ENCODE measurements at regions of chr13 and their contacts with region 1.

Region 1: DNA sequence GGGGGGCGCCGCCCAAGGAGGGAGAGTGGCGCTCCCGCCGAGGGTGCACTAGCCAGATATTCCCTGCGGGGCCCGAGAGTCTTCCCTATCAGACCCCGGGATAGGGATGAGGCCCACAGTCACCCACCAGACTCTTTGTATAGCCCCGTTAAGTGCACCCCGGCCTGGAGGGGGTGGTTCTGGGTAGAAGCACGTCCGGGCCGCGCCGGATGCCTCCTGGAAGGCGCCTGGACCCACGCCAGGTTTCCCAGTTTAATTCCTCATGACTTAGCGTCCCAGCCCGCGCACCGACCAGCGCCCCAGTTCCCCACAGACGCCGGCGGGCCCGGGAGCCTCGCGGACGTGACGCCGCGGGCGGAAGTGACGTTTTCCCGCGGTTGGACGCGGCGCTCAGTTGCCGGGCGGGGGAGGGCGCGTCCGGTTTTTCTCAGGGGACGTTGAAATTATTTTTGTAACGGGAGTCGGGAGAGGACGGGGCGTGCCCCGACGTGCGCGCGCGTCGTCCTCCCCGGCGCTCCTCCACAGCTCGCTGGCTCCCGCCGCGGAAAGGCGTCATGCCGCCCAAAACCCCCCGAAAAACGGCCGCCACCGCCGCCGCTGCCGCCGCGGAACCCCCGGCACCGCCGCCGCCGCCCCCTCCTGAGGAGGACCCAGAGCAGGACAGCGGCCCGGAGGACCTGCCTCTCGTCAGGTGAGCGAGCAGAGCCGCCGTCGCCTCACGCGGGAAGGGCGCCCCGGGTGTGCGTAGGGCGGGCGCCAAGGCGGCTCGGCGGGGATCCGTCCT is at the start of gene RB1:
- DNase-seq: peak; percentile 80
- ATAC-seq: peak; percentile 92
- H3K4me3 ChIP-seq: peak within 1 kb of the TSS; percentile 79 to 91 (median 91)
- H3K27ac ChIP-seq: peak within 1 kb of the TSS; percentile 94
- H3K4me1 ChIP-seq: peaks cover 20% of the 10 kb centered on the region
- H3K27me3 ChIP-seq: no peaks in the 10 kb centered on the region; a peak in 1 of 5 replicates
- CTCF ChIP-seq: 0 out of 2 replicates have a peak, but pooled peaks have one; percentile 2
- EP300 ChIP-seq: 0 out of 4 replicates have a peak, but pooled peaks of 1 of the 2 experiments have one; percentile 24
- POLR2A ChIP-seq: peak; percentile 73 to 82
- RAD21 ChIP-seq: peak; percentile 13
- total RNA-seq, gene RB1: 23.7 and 35.7 TPM in 2 replicates

Region 2: GRCh38 chr13:47788844-47789243 is 514.7 kb before region 1 on chr13:
- CTCF ChIA-PET with region 1: no interaction called
- POLR2A ChIA-PET with region 1: no interaction called
- in situ Hi-C with region 1: no loop called
- intact Hi-C with region 1: no loop called
- DNase-seq: no peak
- ATAC-seq: no peak
- H3K4me3 ChIP-seq: no peak overlapping the region
- H3K27ac ChIP-seq: no peak overlapping the region
- H3K4me1 ChIP-seq: no peaks in the 10 kb centered on the region
- H3K27me3 ChIP-seq: no peaks in the 10 kb centered on the region
- CTCF ChIP-seq: no peak
- EP300 ChIP-seq: no peak
- POLR2A ChIP-seq: no peak
- RAD21 ChIP-seq: no peak

Region 3: GRCh38 chr13:48094781-48095502 is 208.6 kb before region 1 on chr13 and contains the start of gene MED4:
- CTCF ChIA-PET with region 1: no interaction called
- POLR2A ChIA-PET with region 1: no interaction called
- in situ Hi-C with region 1: no loop called
- intact Hi-C with region 1: loop called (anchors 10 kb)
- DNase-seq: peak; percentile 87
- ATAC-seq: peak; percentile 89
- H3K4me3 ChIP-seq: peak within 1 kb of the TSS; percentile 88 to 93 (median 88)
- H3K27ac ChIP-seq: peak within 1 kb of the TSS; percentile 74
- H3K4me1 ChIP-seq: peaks cover 81% of the 10 kb centered on the region
- H3K27me3 ChIP-seq: no peaks in the 10 kb centered on the region; a peak in 1 of 5 replicates
- CTCF ChIP-seq: peak; percentile 96
- EP300 ChIP-seq: peak in 1 of 2 experiments; percentile 23; a peak in 1 of 4 replicates
- POLR2A ChIP-seq: peak; percentile 88 to 89
- RAD21 ChIP-seq: peak; percentile 80
- total RNA-seq, gene MED4: 57.8 and 82.8 TPM in 2 replicates

Region 4: DNA sequence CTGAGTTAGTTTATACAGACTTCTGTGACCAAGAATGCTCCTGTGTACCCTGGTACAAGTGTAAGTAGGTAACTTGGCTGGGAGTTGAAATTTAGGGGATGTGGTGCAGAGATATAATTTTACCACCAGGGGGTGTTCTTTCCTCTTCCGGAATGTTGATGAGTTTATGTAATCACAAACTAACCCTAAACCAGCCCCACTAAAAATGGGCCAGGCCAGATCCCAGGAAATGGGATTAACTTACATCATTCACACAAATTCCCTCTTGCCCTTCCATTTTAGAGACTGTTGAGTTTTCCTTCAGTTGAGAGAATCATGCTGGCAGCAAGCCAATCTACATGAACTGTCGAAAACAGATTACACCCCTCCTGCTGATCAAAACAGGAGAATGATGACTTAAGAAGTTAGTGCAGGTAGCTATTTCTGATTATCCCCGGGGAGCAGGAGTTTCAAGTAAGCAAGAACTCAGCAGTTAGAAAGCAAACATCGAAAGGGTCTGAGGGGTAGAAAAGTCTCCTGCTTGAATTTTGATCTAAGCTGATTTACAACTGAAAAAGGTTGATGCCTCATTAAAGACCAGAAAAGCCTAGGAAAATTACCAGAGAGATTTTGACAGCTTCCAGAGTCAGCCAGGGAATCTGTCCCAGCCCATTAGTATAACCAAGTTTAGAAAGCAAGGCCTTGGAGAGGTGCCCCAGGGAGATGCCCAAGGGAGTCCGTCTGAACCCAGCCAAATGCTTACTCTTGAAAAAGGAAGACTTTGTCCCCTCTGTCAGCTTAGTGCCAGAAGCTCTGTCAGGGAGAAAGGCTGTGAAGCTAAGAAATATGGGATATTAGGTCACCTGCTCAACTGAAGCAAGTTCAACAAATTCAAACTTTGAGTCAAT is 176.4 kb before region 1 on chr13:
- CTCF ChIA-PET with region 1: no interaction called
- POLR2A ChIA-PET with region 1: interaction called, 4 read pairs
- in situ Hi-C with region 1: loop called (anchors 10 kb)
- intact Hi-C with region 1: loop called (anchors 5 kb)
- DNase-seq: peak; percentile 63
- ATAC-seq: peak; percentile 73
- H3K4me3 ChIP-seq: peak overlapping the region in 1 of 3 experiments; percentile 27; a peak in 1 of 6 replicates
- H3K27ac ChIP-seq: no peak overlapping the region
- H3K4me1 ChIP-seq: peaks cover 53% of the 10 kb centered on the region
- H3K27me3 ChIP-seq: no peaks in the 10 kb centered on the region
- CTCF ChIP-seq: peak; percentile 74
- EP300 ChIP-seq: no peak
- POLR2A ChIP-seq: no peak
- RAD21 ChIP-seq: no peak

Region 5: GRCh38 chr13:48255954-48256353 is 47.6 kb before region 1 on chr13:
- CTCF ChIA-PET with region 1: no interaction called
- POLR2A ChIA-PET with region 1: no interaction called
- in situ Hi-C with region 1: no loop called
- intact Hi-C with region 1: loop called (anchors 5 kb)
- DNase-seq: no peak
- ATAC-seq: no peak
- H3K4me3 ChIP-seq: no peak overlapping the region
- H3K27ac ChIP-seq: no peak overlapping the region
- H3K4me1 ChIP-seq: peaks cover 64% of the 10 kb centered on the region
- H3K27me3 ChIP-seq: no peaks in the 10 kb centered on the region
- CTCF ChIP-seq: no peak
- EP300 ChIP-seq: no peak
- POLR2A ChIP-seq: no peak
- RAD21 ChIP-seq: no peak

Region 6: GRCh38 chr13:48412881-48413351 is 109.4 kb after region 1 on chr13 and contains the start of gene LPAR6:
- CTCF ChIA-PET with region 1: no interaction called
- POLR2A ChIA-PET with region 1: no interaction called
- in situ Hi-C with region 1: no loop called
- intact Hi-C with region 1: loop called (anchors 5 kb)
- DNase-seq: peak; percentile 95
- ATAC-seq: peak; percentile 98
- H3K4me3 ChIP-seq: peak within 1 kb of the TSS; percentile 72 to 88 (median 87)
- H3K27ac ChIP-seq: peak within 1 kb of the TSS; percentile 88
- H3K4me1 ChIP-seq: peaks cover 23% of the 10 kb centered on the region
- H3K27me3 ChIP-seq: no peaks in the 10 kb centered on the region; a peak in 1 of 5 replicates
- CTCF ChIP-seq: no peak
- EP300 ChIP-seq: peak in 1 of 2 experiments; percentile 87; a peak in 2 of 4 replicates
- POLR2A ChIP-seq: peak; percentile 61 to 66; a peak in 3 of 4 replicates
- RAD21 ChIP-seq: no peak
- total RNA-seq, gene LPAR6: 17.9 and 24.4 TPM in 2 replicates

Measured in HepG2 (cell line).